GM12878 (cell line): ENCODE measurements at regions of chr2 and their contacts with region 1.

Region 1: DNA sequence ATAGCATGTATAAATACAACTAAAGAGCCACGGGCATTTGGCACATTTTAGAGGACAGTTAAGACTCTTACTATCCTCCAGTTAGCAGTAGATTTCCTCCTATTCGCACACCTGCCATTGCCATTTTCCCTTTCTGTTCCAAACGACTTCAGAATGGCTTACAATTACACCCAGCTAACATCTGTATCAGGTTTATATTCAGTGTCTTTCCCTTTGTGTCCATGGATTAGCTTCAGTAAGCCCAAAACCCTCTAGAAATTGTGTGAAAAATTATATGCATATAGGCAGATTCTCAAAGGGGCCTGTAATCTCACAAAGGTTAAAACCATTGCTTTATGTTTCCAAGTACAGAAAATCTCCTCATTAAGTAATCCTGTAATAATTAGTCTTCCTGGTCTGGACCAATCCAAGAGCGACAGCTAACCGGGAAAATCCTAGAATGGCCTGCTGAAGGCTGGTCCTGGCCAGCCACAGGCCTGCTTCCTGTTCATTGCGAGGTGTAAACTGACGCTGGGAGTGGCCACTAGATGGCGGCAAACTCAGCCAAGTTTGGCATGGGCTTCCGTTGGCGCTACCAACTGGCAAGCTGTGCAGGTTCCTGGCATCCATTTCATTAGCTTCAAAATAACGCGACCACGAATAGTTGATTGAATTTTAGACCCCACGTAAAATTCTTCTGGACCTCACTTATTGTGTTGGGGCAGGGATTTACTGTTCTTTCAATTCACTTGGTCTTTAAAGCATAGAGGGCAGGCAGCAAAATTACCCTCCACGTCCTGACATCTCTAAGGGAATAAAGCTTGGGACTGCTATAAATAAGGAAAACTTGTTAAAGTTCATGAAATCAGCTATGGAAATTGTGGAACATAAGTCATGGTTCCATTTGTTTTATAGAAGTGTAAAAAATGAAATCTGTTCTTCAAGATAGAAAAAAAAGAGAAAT is 17.1 kb downstream of the ARHGAP25 start:
- DNase-seq: no peak
- ATAC-seq: peak; percentile 99
- H3K4me3 ChIP-seq: no peak overlapping the region
- H3K27ac ChIP-seq: no peak overlapping the region
- H3K4me1 ChIP-seq: no peaks in the 10 kb centered on the region
- H3K27me3 ChIP-seq: peaks cover 0 to 1% of the 10 kb centered on the region in 2 experiments; a peak in 2 of 4 replicates
- CTCF ChIP-seq: peak; percentile 90 to 94 (median 92)
- EP300 ChIP-seq: no peak
- POLR2A ChIP-seq: no peak
- RAD21 ChIP-seq: peak; percentile 89

Region 2: DNA sequence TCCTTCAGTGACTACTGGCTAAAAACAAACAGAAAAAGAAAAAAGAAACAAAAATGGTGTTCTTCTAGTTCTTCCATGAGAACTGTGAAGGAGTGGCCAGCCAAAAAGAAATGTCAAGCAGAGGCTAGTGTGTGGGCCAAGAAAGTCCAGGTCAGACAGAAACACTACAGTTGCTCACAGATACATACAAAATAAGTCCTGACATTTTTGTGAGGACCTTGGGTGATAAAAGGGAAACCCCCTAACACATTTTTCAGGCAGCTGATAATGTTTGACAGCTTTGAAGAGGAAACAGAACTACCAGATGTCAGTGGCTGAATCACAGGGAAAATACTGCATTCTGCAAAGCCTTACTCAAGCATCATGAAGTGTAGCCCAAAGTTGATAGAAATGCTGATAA is 11.0 kb after region 1 on chr2:
- CTCF ChIA-PET with region 1: interaction called, 12 read pairs
- POLR2A ChIA-PET with region 1: no interaction called
- RAD21 ChIA-PET with region 1: interaction called, 4 read pairs
- SMC1A ChIA-PET with region 1: interaction called, 7 read pairs
- in situ Hi-C with region 1: no loop called
- intact Hi-C with region 1: no loop called
- DNase-seq: no peak
- ATAC-seq: peak; percentile 51
- H3K4me3 ChIP-seq: no peak overlapping the region
- H3K27ac ChIP-seq: no peak overlapping the region
- H3K4me1 ChIP-seq: peaks cover 26% of the 10 kb centered on the region
- H3K27me3 ChIP-seq: peaks cover 4 to 5% of the 10 kb centered on the region in 2 experiments; a peak in 3 of 4 replicates
- CTCF ChIP-seq: no peak
- EP300 ChIP-seq: no peak
- POLR2A ChIP-seq: no peak
- RAD21 ChIP-seq: no peak

Region 3: DNA sequence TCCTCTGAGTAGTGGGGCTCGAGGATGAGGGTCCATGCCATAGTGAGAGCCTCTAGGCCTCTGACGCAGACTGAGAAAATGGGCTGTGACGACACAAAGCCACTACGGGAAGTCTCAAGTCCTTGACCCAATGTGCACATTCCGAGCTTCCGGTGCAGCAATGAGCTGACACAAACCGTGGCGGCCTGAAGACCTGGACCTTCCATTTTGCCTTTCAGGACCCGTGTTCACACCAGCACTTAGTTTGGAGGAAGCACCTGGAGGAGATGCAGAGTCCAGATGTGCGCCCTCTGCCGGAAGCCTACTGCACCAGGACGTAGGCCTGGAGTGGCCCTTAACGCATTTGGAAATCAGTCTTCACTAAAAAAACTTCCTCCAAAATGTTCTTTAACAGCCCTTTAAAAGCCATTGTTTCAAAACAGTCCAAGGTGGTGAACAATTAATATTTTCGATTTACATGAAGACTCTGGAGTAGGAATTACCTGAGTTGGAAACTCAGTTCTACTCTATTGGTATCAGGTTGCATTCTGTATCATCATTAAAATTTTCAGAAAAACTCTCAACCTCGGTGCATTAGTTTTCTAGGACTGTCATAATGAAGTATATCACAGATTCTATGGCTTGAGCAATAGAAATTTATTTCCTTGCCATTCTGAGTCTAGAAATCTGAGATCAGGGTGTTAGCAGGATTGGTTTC is 85.6 kb after region 1 on chr2:
- CTCF ChIA-PET with region 1: interaction called, 75 read pairs
- POLR2A ChIA-PET with region 1: no interaction called
- RAD21 ChIA-PET with region 1: interaction called, 11 read pairs
- SMC1A ChIA-PET with region 1: interaction called, 27 read pairs
- in situ Hi-C with region 1: no loop called
- intact Hi-C with region 1: loop called (anchors 1 kb)
- DNase-seq: peak; percentile 13
- ATAC-seq: peak; percentile 91
- H3K4me3 ChIP-seq: no peak overlapping the region
- H3K27ac ChIP-seq: no peak overlapping the region
- H3K4me1 ChIP-seq: peaks cover 27% of the 10 kb centered on the region
- H3K27me3 ChIP-seq: peaks cover 0 to 2% of the 10 kb centered on the region in 2 experiments; a peak in 1 of 4 replicates
- CTCF ChIP-seq: peak; percentile 67 to 85 (median 84)
- EP300 ChIP-seq: no peak
- POLR2A ChIP-seq: no peak
- RAD21 ChIP-seq: peak; percentile 55

Region 4: DNA sequence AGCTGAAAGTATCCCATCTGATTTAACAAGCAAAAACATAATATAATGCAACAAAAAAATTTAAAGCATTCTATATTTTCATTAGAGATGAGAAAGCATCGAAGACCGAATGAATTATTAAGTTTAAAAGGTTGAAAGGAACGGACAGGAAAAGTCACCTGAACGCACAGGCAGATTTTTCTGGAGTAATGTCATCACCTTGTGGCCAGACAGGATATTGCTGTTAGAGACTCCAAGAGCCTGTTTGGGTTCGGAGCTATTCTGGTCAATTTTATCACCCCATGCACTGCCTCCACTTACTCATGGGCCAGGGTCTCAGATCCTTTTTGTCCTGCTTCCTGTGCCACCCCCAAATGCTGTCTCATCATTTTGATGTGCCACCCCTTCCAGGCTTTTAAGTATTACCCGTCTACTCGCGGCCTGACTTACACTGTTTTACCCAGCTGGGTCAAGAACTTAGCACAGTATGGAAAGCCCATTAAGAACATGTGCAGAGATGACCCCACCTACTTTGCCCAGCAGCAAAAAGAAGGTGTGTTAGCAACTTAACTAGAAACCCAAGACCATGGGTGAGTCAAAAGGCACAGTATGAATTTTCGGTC is 173.7 kb after region 1 on chr2:
- CTCF ChIA-PET with region 1: interaction called, 30 read pairs
- POLR2A ChIA-PET with region 1: no interaction called
- RAD21 ChIA-PET with region 1: interaction called, 16 read pairs
- SMC1A ChIA-PET with region 1: interaction called, 18 read pairs
- in situ Hi-C with region 1: no loop called
- intact Hi-C with region 1: no loop called
- DNase-seq: peak; percentile 12
- ATAC-seq: peak; percentile 83
- H3K4me3 ChIP-seq: no peak overlapping the region
- H3K27ac ChIP-seq: no peak overlapping the region
- H3K4me1 ChIP-seq: no peaks in the 10 kb centered on the region
- H3K27me3 ChIP-seq: peaks cover 0 to 2% of the 10 kb centered on the region in 2 experiments; a peak in 3 of 4 replicates
- CTCF ChIP-seq: peak; percentile 87 to 96 (median 91)
- EP300 ChIP-seq: no peak
- POLR2A ChIP-seq: no peak
- RAD21 ChIP-seq: peak; percentile 90